K562 (cell line): ENCODE measurements at regions of chr16 and their contacts with region 1.

Region 1: DNA sequence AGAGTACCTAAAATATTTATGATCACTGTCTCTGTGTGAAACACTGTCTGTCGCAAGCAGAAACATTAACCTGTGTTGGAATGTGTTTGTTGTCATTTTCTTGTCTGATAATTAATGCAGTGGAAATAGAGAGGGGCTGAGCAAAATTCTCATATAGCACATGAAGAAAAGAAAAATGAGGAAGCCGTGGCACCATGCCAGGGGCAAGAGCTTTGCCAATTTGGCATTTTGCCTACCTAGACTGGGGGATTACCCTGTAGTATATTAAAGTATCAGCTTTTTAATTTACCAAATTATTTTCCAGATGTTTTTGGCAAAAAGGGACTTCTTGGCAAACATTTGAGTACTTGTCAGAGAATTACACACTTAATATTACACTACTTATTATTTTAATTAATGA is 1326.6 kb upstream of the GOT2 start:
- DNase-seq: no peak
- ATAC-seq: no peak
- H3K4me3 ChIP-seq: no peak overlapping the region
- H3K27ac ChIP-seq: no peak overlapping the region
- H3K4me1 ChIP-seq: no peaks in the 10 kb centered on the region
- H3K27me3 ChIP-seq: no peaks in the 10 kb centered on the region
- CTCF ChIP-seq: no peak
- EP300 ChIP-seq: no peak
- POLR2A ChIP-seq: no peak
- RAD21 ChIP-seq: no peak

Region 2: GRCh38 chr16:60013076-60013475 is 47.7 kb before region 1 on chr16:
- CTCF ChIA-PET with region 1: no interaction called
- POLR2A ChIA-PET with region 1: no interaction called
- in situ Hi-C with region 1: no loop called
- intact Hi-C with region 1: loop called (anchors 5 kb)
- DNase-seq: no peak
- ATAC-seq: no peak
- H3K4me3 ChIP-seq: no peak overlapping the region
- H3K27ac ChIP-seq: no peak overlapping the region
- H3K4me1 ChIP-seq: no peaks in the 10 kb centered on the region
- H3K27me3 ChIP-seq: no peaks in the 10 kb centered on the region
- CTCF ChIP-seq: no peak
- EP300 ChIP-seq: no peak
- POLR2A ChIP-seq: no peak
- RAD21 ChIP-seq: no peak